GM12878 (cell line): ENCODE measurements at regions of chrX and their contacts with region 1.

Region 1: GRCh38 chrX:128816919-128817318 is 706.4 kb downstream of the SMARCA1 start:
- DNase-seq: no peak
- ATAC-seq: no peak
- H3K4me3 ChIP-seq: no peak overlapping the region
- H3K27ac ChIP-seq: no peak overlapping the region
- H3K4me1 ChIP-seq: no peaks in the 10 kb centered on the region
- H3K27me3 ChIP-seq: no peaks in the 10 kb centered on the region
- CTCF ChIP-seq: peak in 2 of 3 experiments; percentile 37; a peak in 4 of 6 replicates
- EP300 ChIP-seq: no peak
- POLR2A ChIP-seq: no peak
- RAD21 ChIP-seq: no peak

Region 2: GRCh38 chrX:129360175-129360574 is 543.3 kb after region 1 on chrX:
- CTCF ChIA-PET with region 1: no interaction called
- POLR2A ChIA-PET with region 1: no interaction called
- RAD21 ChIA-PET with region 1: no interaction called
- SMC1A ChIA-PET with region 1: no interaction called
- in situ Hi-C with region 1: no loop called
- intact Hi-C with region 1: loop called (anchors 2 kb)
- DNase-seq: peak; percentile 21
- ATAC-seq: peak; percentile 97
- H3K4me3 ChIP-seq: no peak overlapping the region
- H3K27ac ChIP-seq: no peak overlapping the region
- H3K4me1 ChIP-seq: no peaks in the 10 kb centered on the region
- H3K27me3 ChIP-seq: no peaks in the 10 kb centered on the region
- CTCF ChIP-seq: peak; percentile 47 to 66 (median 60); a peak in 5 of 6 replicates
- EP300 ChIP-seq: no peak
- POLR2A ChIP-seq: no peak
- RAD21 ChIP-seq: peak; percentile 72